Activated CD8-positive, alpha-beta T cell treated with anti-CD3 and anti-CD28 coated beads for 36 hours (primary cell): ENCODE measurements at regions of chr5 and their contacts with region 1.

Region 1: DNA sequence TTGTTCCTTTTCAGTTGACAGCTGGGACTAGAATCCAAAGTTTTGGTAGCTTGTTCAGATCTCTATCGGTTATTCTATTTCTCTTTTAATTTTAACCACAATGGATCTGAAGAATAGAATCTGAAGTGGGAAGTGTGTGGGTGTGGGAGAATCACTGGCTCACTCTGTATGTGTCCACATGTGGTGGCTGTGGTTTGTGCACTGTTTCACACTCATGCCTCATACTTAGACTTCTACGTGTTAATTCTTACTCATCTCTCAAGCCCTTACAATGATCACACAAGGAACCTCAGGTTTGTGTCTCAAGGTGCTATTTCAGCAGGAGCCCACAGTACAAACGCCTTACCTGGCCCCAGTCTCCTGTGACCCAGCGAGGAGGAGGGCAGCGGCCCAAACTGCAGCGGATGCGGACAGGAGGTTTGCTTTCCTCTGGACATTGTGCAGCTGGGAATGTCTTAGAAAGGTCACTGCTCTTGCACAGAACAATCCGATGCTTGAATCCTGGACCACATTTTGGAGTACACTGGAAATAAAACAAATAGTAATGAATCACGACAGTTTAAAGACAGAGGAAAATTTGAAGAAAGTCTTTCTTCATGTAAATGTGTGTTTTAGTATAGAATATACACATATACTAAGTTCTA is 309.1 kb downstream of the ADAMTS6 start:
- DNase-seq: peak; percentile 92
- ATAC-seq: peak; percentile 99
- H3K4me3 Mint-ChIP-seq: no peak overlapping the region
- H3K27ac Mint-ChIP-seq: no peak overlapping the region
- H3K4me1 Mint-ChIP-seq: peaks cover 9% of the 10 kb centered on the region
- H3K27me3 Mint-ChIP-seq: no peaks in the 10 kb centered on the region
- CTCF ChIP-seq: no peak

Region 2: DNA sequence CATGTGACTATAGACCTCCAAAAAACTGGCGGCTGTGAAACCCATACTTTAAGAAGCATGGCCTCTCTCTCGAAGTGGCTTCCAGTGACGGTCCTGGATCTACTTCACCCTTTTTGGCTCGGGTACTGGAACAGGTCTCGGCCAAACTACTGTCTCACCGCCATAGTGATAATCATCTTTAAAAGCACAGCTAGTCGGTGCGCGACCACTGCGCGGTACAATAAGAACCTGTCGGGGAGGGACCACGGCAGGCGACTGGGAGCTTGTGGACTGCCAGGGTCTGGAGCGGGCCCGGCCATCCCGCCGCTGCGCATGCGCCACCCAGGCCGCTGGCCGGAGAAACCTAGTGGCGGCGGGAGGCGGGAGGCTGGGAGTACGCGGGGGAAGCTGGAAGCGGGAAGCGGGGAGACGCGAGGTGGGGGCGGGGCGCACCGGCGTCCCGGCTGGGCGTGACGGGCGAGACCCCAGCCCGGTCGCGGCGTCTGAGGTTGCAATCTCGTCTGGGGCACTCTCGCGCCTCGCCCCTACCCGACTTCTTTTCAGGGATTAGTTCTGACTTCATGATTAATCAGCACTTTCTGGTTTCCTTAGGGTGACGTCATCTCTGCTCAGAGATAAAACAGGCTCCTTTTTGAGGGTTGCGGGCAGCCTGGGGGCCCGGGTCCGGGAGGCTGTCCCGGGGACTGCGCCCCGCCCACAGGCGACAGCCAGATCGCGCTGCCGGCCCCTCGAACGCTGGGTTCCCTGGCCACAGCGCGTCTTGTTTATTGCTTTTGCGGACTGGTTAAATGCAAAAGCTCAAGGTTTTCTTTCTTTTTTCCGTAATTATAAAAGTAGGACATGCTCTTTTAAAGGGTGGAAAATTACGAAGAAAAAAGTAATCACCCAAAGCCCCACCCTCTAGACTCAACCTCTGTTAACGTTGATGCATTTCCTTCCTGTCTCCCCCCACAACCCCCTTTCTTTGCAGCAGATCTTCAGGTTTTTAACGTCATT is 137.1 kb before region 1 on chr5:
- CTCF ChIA-PET with region 1: no interaction called
- POLR2A ChIA-PET with region 1: no interaction called
- intact Hi-C with region 1: no loop called
- DNase-seq: peak; percentile 88
- ATAC-seq: peak; percentile 88
- H3K4me3 Mint-ChIP-seq: peak overlapping the region; percentile 68
- H3K27ac Mint-ChIP-seq: peak overlapping the region; percentile 93
- H3K4me1 Mint-ChIP-seq: peaks cover 28% of the 10 kb centered on the region
- H3K27me3 Mint-ChIP-seq: no peaks in the 10 kb centered on the region
- CTCF ChIP-seq: no peak

Region 3: GRCh38 chr5:65190328-65191053 is 17.9 kb after region 1 on chr5:
- CTCF ChIA-PET with region 1: no interaction called
- POLR2A ChIA-PET with region 1: interaction called, 3 read pairs
- intact Hi-C with region 1: loop called (anchors 1 kb)
- DNase-seq: peak; percentile 44
- ATAC-seq: peak; percentile 91
- H3K4me3 Mint-ChIP-seq: no peak overlapping the region
- H3K27ac Mint-ChIP-seq: peak overlapping the region; percentile 7
- H3K4me1 Mint-ChIP-seq: peaks cover 21% of the 10 kb centered on the region
- H3K27me3 Mint-ChIP-seq: no peaks in the 10 kb centered on the region
- CTCF ChIP-seq: no peak